Activated CD4-positive, alpha-beta memory T cell treated with anti-CD3 and anti-CD28 coated beads, Interleukin-2, amount 10 ng/mL, durations not matched to agents 7 days and 5 days (primary cell): ENCODE measurements at regions of chr14 and their contacts with region 1.

Region 1: GRCh38 chr14:61475316-61475715 is 153.9 kb downstream of the PRKCH start:
- DNase-seq: no peak
- H3K4me3 Mint-ChIP-seq: no peak overlapping the region
- H3K27ac Mint-ChIP-seq: peak overlapping the region; percentile 89
- H3K4me1 Mint-ChIP-seq: peaks cover 95% of the 10 kb centered on the region
- H3K27me3 Mint-ChIP-seq: no peaks in the 10 kb centered on the region

Region 2: DNA sequence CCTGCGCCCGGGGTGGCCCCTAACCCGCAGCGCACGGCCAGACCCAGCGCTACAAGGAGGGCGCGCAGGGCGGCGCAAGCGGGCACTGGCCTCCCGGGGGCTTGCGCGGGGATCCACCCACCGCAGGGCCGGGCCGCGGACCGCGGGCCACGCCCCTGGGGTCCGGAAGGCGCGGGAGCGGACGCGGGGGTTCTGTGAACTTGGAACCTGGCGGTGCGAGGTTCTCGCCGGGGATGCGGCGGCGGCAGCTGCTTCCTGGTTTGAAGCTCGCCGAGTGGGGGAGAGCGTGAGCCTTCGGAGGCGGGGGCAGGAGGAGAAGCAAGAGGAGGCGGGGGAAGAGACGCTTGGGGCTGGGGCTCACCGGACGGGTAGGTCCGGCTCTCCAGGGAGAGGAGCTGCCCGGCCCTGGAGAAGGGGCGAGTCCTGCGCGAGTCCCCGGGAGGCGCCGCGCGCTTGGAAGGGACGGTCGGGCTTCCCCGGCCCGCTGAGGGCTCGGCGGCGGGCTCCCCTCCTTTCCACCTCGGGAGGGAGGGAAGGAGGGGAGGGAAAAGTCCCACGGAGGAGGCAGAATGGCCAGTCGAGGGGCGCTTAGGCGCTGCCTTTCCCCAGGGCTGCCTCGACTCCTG is 153.8 kb before region 1 on chr14 and contains the start of gene PRKCH:
- CTCF ChIA-PET with region 1: interaction called, 4 read pairs
- POLR2A ChIA-PET with region 1: interaction called, 25 read pairs
- DNase-seq: peak; percentile 91
- H3K4me3 Mint-ChIP-seq: peak within 1 kb of the TSS; percentile 87
- H3K27ac Mint-ChIP-seq: peak within 1 kb of the TSS; percentile 86
- H3K4me1 Mint-ChIP-seq: peaks cover 24% of the 10 kb centered on the region
- H3K27me3 Mint-ChIP-seq: no peaks in the 10 kb centered on the region
- total RNA-seq, gene PRKCH: 186 to 195 TPM

Region 3: GRCh38 chr14:61456720-61457119 is 18.6 kb before region 1 on chr14:
- CTCF ChIA-PET with region 1: interaction called, 12 read pairs
- POLR2A ChIA-PET with region 1: interaction called, 27 read pairs
- DNase-seq: peak; percentile 82
- H3K4me3 Mint-ChIP-seq: no peak overlapping the region
- H3K27ac Mint-ChIP-seq: peak overlapping the region; percentile 33
- H3K4me1 Mint-ChIP-seq: peaks cover 88% of the 10 kb centered on the region
- H3K27me3 Mint-ChIP-seq: no peaks in the 10 kb centered on the region

Region 4: GRCh38 chr14:61503167-61503801 is 28.0 kb after region 1 on chr14:
- CTCF ChIA-PET with region 1: interaction called, 16 read pairs
- POLR2A ChIA-PET with region 1: interaction called, 62 read pairs
- DNase-seq: peak; percentile 80
- H3K4me3 Mint-ChIP-seq: peak overlapping the region; percentile 62
- H3K27ac Mint-ChIP-seq: peak overlapping the region; percentile 95
- H3K4me1 Mint-ChIP-seq: peaks cover 75% of the 10 kb centered on the region
- H3K27me3 Mint-ChIP-seq: no peaks in the 10 kb centered on the region

Region 5: GRCh38 chr14:61538464-61539304 is 63.4 kb after region 1 on chr14:
- CTCF ChIA-PET with region 1: no interaction called
- POLR2A ChIA-PET with region 1: no interaction called
- DNase-seq: no peak
- H3K4me3 Mint-ChIP-seq: no peak overlapping the region
- H3K27ac Mint-ChIP-seq: no peak overlapping the region
- H3K4me1 Mint-ChIP-seq: peaks cover 58% of the 10 kb centered on the region
- H3K27me3 Mint-ChIP-seq: no peaks in the 10 kb centered on the region

Region 6: GRCh38 chr14:61662437-61663311 is 187.4 kb after region 1 on chr14:
- CTCF ChIA-PET with region 1: interaction called, 6 read pairs
- POLR2A ChIA-PET with region 1: interaction called, 32 read pairs
- DNase-seq: peak; percentile 79
- H3K4me3 Mint-ChIP-seq: peak overlapping the region; percentile 70
- H3K27ac Mint-ChIP-seq: peak overlapping the region; percentile 98
- H3K4me1 Mint-ChIP-seq: peaks cover 79% of the 10 kb centered on the region
- H3K27me3 Mint-ChIP-seq: no peaks in the 10 kb centered on the region

Region 7: GRCh38 chr14:61761959-61762786 is 286.9 kb after region 1 on chr14 and contains the start of gene SNAPC1:
- CTCF ChIA-PET with region 1: interaction called, 4 read pairs
- POLR2A ChIA-PET with region 1: interaction called, 10 read pairs
- DNase-seq: peak; percentile 98
- H3K4me3 Mint-ChIP-seq: peak within 1 kb of the TSS; percentile 98
- H3K27ac Mint-ChIP-seq: peak within 1 kb of the TSS; percentile 96
- H3K4me1 Mint-ChIP-seq: peaks cover 50% of the 10 kb centered on the region
- H3K27me3 Mint-ChIP-seq: peaks cover 4% of the 10 kb centered on the region
- total RNA-seq, gene SNAPC1: 5.5 to 6.0 TPM

Region 8: DNA sequence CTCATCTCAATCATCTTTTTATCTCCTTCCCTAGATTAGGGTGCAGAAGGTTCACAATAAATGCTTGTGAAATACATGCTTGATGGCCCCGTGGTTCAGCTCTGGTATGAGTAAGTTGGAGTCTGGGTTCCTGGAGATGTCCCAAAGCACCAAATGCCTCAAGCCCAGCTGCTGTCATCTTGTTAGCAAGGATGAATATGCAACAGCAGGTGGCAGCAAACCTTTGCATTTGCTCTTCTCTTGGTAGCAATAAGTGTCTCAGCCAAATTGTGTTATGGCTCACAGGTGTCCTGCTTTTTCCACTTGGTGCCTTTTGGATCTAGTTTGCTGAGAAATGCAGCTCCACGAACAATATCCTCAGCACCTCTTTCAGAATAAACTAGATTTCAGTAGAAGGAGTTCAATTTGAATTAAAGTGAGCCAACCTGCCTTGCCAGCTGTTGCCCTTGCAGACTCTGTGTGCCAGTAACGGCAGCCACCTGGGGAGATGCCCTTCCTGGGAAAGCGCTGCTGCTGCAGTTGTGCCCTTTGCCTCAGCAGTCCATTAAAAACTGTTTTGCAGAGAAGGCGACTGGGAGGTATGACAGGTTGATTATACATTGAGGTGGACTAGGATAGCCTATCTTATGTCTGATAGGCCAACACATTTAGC is 704.2 kb after region 1 on chr14:
- CTCF ChIA-PET with region 1: no interaction called
- POLR2A ChIA-PET with region 1: no interaction called
- DNase-seq: peak; percentile 31
- H3K4me3 Mint-ChIP-seq: no peak overlapping the region
- H3K27ac Mint-ChIP-seq: no peak overlapping the region
- H3K4me1 Mint-ChIP-seq: no peaks in the 10 kb centered on the region
- H3K27me3 Mint-ChIP-seq: no peaks in the 10 kb centered on the region